B cell (primary cell): ENCODE measurements at regions of chr9 and their contacts with region 1.

Region 1: GRCh38 chr9:92728831-92729734 is 35.5 kb downstream of the BICD2 start:
- DNase-seq: peak; percentile 80
- ATAC-seq: peak; percentile 92
- H3K4me3 ChIP-seq: peak overlapping the region in 4 of 5 experiments; percentile 31 to 67 (median 52)
- H3K4me3 Mint-ChIP-seq: peak overlapping the region; percentile 91
- H3K27ac ChIP-seq: peak overlapping the region; percentile 58 to 76
- H3K27ac Mint-ChIP-seq: peak overlapping the region; percentile 95
- H3K4me1 ChIP-seq: peaks cover 63 to 81% of the 10 kb centered on the region in 2 donors
- H3K4me1 Mint-ChIP-seq: peaks cover 84% of the 10 kb centered on the region
- H3K27me3 ChIP-seq: no peaks in the 10 kb centered on the region
- H3K27me3 Mint-ChIP-seq: no peaks in the 10 kb centered on the region
- CTCF ChIP-seq: peak; percentile 78

Region 2: DNA sequence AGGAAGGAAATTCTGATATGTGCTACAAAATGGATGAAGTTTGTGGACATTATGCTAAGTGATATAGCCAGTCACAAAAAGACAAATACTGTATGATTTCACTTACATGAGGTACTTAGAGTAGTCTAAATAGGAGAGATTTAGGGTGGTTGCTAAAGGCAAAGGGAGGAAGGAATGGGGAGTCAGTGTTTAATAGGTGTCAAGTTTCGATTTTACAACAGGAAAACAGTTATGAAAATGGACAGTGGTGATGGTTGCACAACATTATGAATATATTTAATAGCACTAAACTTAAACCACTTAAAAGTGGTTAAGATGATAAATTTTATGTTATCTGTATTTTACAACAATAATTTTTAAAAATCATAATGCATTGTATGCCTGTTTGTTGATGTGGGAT is 152.9 kb before region 1 on chr9:
- CTCF ChIA-PET with region 1: no interaction called
- POLR2A ChIA-PET with region 1: no interaction called
- intact Hi-C with region 1: no loop called
- DNase-seq: no peak
- ATAC-seq: no peak
- H3K4me3 ChIP-seq: no peak overlapping the region
- H3K4me3 Mint-ChIP-seq: no peak overlapping the region
- H3K27ac ChIP-seq: no peak overlapping the region
- H3K27ac Mint-ChIP-seq: no peak overlapping the region
- H3K4me1 ChIP-seq: no peaks in the 10 kb centered on the region
- H3K4me1 Mint-ChIP-seq: no peaks in the 10 kb centered on the region
- H3K27me3 ChIP-seq: no peaks in the 10 kb centered on the region
- H3K27me3 Mint-ChIP-seq: no peaks in the 10 kb centered on the region
- CTCF ChIP-seq: no peak

Region 3: GRCh38 chr9:92716557-92716956 is 12.5 kb before region 1 on chr9:
- CTCF ChIA-PET with region 1: interaction called, 109 read pairs
- POLR2A ChIA-PET with region 1: interaction called, 3 read pairs
- intact Hi-C with region 1: no loop called
- DNase-seq: peak; percentile 82
- ATAC-seq: peak; percentile 79
- H3K4me3 ChIP-seq: no peak overlapping the region
- H3K4me3 Mint-ChIP-seq: no peak overlapping the region
- H3K27ac ChIP-seq: no peak overlapping the region
- H3K27ac Mint-ChIP-seq: no peak overlapping the region
- H3K4me1 ChIP-seq: peaks cover 31 to 66% of the 10 kb centered on the region in 2 donors
- H3K4me1 Mint-ChIP-seq: peaks cover 54% of the 10 kb centered on the region
- H3K27me3 ChIP-seq: no peaks in the 10 kb centered on the region
- H3K27me3 Mint-ChIP-seq: no peaks in the 10 kb centered on the region
- CTCF ChIP-seq: peak; percentile 93

Region 4: GRCh38 chr9:92770360-92770995 is 41.4 kb after region 1 on chr9:
- CTCF ChIA-PET with region 1: interaction called, 55 read pairs
- POLR2A ChIA-PET with region 1: interaction called, 20 read pairs
- intact Hi-C with region 1: loop called (anchors 1 kb)
- DNase-seq: peak; percentile 82
- ATAC-seq: peak; percentile 94
- H3K4me3 ChIP-seq: peak overlapping the region in 3 of 5 experiments; percentile 2 to 17 (median 12)
- H3K4me3 Mint-ChIP-seq: peak overlapping the region; percentile 74
- H3K27ac ChIP-seq: peak overlapping the region; percentile 79 to 88
- H3K27ac Mint-ChIP-seq: peak overlapping the region; percentile 97
- H3K4me1 ChIP-seq: peaks cover 31 to 40% of the 10 kb centered on the region in 2 donors
- H3K4me1 Mint-ChIP-seq: peaks cover 44% of the 10 kb centered on the region
- H3K27me3 ChIP-seq: no peaks in the 10 kb centered on the region
- H3K27me3 Mint-ChIP-seq: no peaks in the 10 kb centered on the region
- CTCF ChIP-seq: no peak

Region 5: GRCh38 chr9:93379051-93379450 is 650.0 kb after region 1 on chr9:
- CTCF ChIA-PET with region 1: no interaction called
- POLR2A ChIA-PET with region 1: no interaction called
- intact Hi-C with region 1: no loop called
- DNase-seq: no peak
- ATAC-seq: no peak
- H3K4me3 ChIP-seq: no peak overlapping the region
- H3K4me3 Mint-ChIP-seq: no peak overlapping the region
- H3K27ac ChIP-seq: no peak overlapping the region
- H3K27ac Mint-ChIP-seq: no peak overlapping the region
- H3K4me1 ChIP-seq: no peaks in the 10 kb centered on the region
- H3K4me1 Mint-ChIP-seq: no peaks in the 10 kb centered on the region
- H3K27me3 ChIP-seq: peaks cover 0 to 9% (median 0%) of the 10 kb centered on the region in 4 experiments
- H3K27me3 Mint-ChIP-seq: peaks cover 30% of the 10 kb centered on the region
- CTCF ChIP-seq: peak; percentile 17